G401 (cell line): ENCODE measurements at regions of chr10 and their contacts with region 1.

Region 1: DNA sequence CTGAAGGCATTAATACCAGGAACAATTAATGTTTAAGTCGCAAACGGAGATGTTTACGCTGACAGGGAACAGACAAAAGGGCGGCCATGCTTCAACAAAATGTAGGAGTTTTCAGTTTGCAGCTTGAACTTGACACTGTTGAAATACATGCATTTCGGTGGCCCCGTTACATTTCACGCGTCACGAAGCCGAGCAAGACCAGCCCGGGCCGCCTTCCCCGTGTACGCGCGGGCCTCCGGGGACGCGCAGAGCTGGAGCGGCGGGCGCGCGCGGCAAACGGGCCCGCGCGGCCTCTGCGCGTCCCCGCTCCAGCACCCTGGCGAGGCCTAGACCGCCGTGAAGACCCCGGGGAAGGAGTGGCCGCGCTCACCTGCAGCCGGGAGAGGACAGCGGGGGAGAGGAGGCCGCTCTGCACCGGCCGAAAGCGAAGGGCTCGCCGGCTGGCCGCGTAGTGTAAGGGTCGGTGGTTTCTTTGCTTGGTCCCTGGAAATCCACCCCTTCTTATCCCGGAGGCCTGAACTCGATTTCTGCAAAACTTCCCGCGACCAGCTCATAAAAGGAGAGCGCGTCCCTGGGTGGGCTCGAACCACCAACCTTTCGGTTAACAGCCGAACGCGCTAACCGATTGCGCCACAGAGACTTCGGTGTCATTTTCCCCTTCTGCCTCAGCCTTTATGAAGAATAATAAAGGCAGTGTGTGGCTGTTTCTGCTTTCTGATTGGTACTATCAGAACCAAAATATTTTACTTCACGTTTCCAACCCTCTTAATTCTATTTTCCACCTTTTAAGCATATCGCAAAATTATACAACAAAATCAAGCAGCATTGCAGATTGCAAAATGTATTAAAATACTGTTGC is 11.4 kb upstream of the EBLN1 start:
- DNase-seq: peak; percentile 89

Region 2: GRCh38 chr10:21989453-21990154 is 239.6 kb before region 1 on chr10:
- in situ Hi-C with region 1: no loop called
- DNase-seq: peak; percentile 84

Region 3: DNA sequence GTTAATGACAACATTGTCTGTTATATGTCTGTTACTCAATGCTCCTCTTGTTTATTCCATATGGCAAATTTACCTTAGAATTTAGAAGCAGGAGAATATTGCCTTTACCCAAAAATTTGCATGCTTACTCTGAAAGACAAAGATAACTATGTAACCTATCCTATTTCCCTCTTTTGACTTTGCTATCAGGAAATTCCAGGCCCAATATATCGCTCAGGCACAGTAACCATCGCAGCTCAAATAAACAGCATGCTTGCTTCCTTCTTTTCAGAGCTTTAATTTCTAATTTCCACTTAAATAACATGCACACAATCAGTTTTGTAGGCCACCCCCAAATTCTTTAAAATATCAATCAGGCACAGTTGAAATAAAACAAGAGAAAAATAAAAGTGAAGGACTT is 69.2 kb before region 1 on chr10:
- in situ Hi-C with region 1: loop called (anchors 10 kb)
- DNase-seq: no peak

Region 4: GRCh38 chr10:22285130-22285529 is 56.0 kb after region 1 on chr10:
- in situ Hi-C with region 1: no loop called
- DNase-seq: peak; percentile 91

Region 5: GRCh38 chr10:22316285-22317120 is 87.3 kb after region 1 on chr10 and contains the start of gene COMMD3:
- in situ Hi-C with region 1: no loop called
- DNase-seq: peak; percentile 87
- total RNA-seq, gene COMMD3: 119 and 132 TPM in 2 replicates

Region 6: GRCh38 chr10:22335173-22336123 is 106.3 kb after region 1 on chr10:
- in situ Hi-C with region 1: no loop called
- DNase-seq: no peak